HEK293 (cell line): ENCODE measurements at regions of chr17 and their contacts with region 1.

Region 1: DNA sequence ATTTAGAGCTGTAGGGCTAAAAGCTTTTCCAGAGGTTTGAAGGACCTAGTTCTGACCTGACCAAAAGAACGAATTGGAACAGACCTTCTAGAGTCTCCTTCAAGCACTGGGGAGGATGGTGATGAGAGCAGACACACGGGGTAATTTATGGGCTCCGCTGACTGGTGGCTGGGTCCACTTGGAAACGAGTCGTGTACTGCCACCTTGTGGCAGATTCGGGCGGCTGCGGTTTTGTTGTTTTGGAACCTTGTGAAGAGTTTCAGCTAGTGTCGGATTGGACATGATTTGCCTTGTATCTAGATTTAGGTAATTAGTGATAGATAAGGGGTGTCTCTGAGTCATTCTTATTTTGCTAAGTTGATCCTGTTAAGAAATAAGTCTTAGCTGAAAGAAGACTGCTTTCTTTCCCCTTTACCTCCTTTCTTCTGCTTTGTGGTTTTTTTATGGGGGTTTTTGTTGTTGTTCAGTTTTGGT is 98.9 kb downstream of the AATF start:
- H3K4me3 ChIP-seq: no peak overlapping the region
- H3K27ac ChIP-seq: no peak overlapping the region
- H3K4me1 ChIP-seq: peaks cover 20% of the 10 kb centered on the region; the same call in 1 of the 2 replicates
- CTCF ChIP-seq: peak; percentile 78

Region 2: GRCh38 chr17:35870906-35871819 is 1176.5 kb before region 1 on chr17:
- CTCF ChIA-PET with region 1: no interaction called
- POLR2A ChIA-PET with region 1: no interaction called
- H3K4me3 ChIP-seq: no peak overlapping the region
- H3K27ac ChIP-seq: no peak overlapping the region
- H3K4me1 ChIP-seq: no peaks in the 10 kb centered on the region
- CTCF ChIP-seq: no peak

Region 3: GRCh38 chr17:36629252-36629847 is 418.3 kb before region 1 on chr17:
- CTCF ChIA-PET with region 1: interaction called, 84 read pairs
- POLR2A ChIA-PET with region 1: no interaction called
- H3K4me3 ChIP-seq: no peak overlapping the region
- H3K27ac ChIP-seq: no peak overlapping the region
- H3K4me1 ChIP-seq: no peaks in the 10 kb centered on the region
- CTCF ChIP-seq: peak; percentile 99

Region 4: GRCh38 chr17:36705874-36706731 is 341.6 kb before region 1 on chr17:
- CTCF ChIA-PET with region 1: interaction called, 25 read pairs
- POLR2A ChIA-PET with region 1: no interaction called
- H3K4me3 ChIP-seq: no peak overlapping the region
- H3K27ac ChIP-seq: no peak overlapping the region
- H3K4me1 ChIP-seq: peaks cover 3% of the 10 kb centered on the region; the same call in 1 of the 2 replicates
- CTCF ChIP-seq: peak; percentile 29; the same call in 1 of the 2 replicates

Region 5: GRCh38 chr17:36948717-36949460 is 98.8 kb before region 1 on chr17 and contains the start of gene AATF:
- CTCF ChIA-PET with region 1: interaction called, 22 read pairs
- POLR2A ChIA-PET with region 1: interaction called, 4 read pairs
- H3K4me3 ChIP-seq: peak within 1 kb of the TSS; percentile 89
- H3K27ac ChIP-seq: peak within 1 kb of the TSS; percentile 85
- H3K4me1 ChIP-seq: peaks cover 3% of the 10 kb centered on the region; the same call in 1 of the 2 replicates
- CTCF ChIP-seq: peak; percentile 61; the same call in 1 of the 2 replicates

Region 6: GRCh38 chr17:37239690-37240334 is 192.1 kb after region 1 on chr17:
- CTCF ChIA-PET with region 1: interaction called, 24 read pairs
- POLR2A ChIA-PET with region 1: no interaction called
- H3K4me3 ChIP-seq: no peak overlapping the region
- H3K27ac ChIP-seq: no peak overlapping the region
- H3K4me1 ChIP-seq: no peaks in the 10 kb centered on the region
- CTCF ChIP-seq: 0 out of 2 replicates have a peak, but pooled peaks have one; percentile 38